A549 (cell line): ENCODE measurements at regions of chr1 and their contacts with region 1.

Region 1: DNA sequence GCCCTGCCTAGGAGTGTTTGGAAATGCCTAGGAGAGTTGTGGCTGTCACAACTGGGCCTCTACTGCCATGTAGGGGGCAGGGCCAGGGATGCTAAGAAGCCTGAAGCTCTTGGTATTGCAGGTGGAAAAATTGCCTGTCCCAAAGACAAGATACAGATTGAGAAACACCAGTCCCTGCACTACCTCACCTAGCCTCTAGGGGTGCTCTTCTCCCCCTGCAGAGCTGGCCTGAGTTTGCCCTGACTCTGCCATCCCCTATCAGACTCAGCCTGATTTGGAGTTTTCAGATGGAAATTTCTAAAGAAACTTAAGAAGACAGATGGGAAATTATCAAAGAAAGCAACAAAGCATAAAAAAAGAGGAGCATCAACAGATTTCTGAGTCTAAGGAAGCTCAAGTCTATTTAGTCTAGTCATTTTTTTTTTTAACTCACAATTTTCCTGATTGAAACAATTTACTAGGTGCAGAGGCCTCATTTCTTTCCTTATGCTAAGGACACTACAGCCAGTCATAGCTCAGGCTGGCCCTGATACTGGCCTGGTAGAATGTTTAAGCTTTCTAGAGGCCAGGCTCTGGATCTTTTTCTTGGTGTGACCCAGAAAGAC is 61.4 kb upstream of the LRRN2 start:
- DNase-seq: peak; percentile 50 to 67
- ATAC-seq: peak; percentile 81 to 89
- H3K4me3 ChIP-seq: no peak overlapping the region
- H3K27ac ChIP-seq: no peak overlapping the region
- H3K4me1 ChIP-seq: peaks cover 10% of the 10 kb centered on the region
- CTCF ChIP-seq: peak; percentile 76
- EP300 ChIP-seq: no peak
- POLR2A ChIP-seq: no peak
- RAD21 ChIP-seq: peak; percentile 42 to 51; a peak in 4 of 5 replicates

Region 2: GRCh38 chr1:204572931-204573891 is 173.7 kb before region 1 on chr1:
- CTCF ChIA-PET with region 1: interaction called, 15 read pairs
- POLR2A ChIA-PET with region 1: no interaction called
- DNase-seq: peak; percentile 30 to 57
- ATAC-seq: peak; percentile 59 to 65
- H3K4me3 ChIP-seq: no peak overlapping the region
- H3K27ac ChIP-seq: peak overlapping the region; percentile 36 to 51
- H3K4me1 ChIP-seq: peaks cover 27% of the 10 kb centered on the region
- CTCF ChIP-seq: no peak
- EP300 ChIP-seq: peak; percentile 25 to 60; a peak in 3 of 5 replicates
- POLR2A ChIP-seq: no peak
- RAD21 ChIP-seq: 0 out of 5 replicates have a peak, but pooled peaks of 1 of the 2 experiments have one; percentile 2

Region 3: DNA sequence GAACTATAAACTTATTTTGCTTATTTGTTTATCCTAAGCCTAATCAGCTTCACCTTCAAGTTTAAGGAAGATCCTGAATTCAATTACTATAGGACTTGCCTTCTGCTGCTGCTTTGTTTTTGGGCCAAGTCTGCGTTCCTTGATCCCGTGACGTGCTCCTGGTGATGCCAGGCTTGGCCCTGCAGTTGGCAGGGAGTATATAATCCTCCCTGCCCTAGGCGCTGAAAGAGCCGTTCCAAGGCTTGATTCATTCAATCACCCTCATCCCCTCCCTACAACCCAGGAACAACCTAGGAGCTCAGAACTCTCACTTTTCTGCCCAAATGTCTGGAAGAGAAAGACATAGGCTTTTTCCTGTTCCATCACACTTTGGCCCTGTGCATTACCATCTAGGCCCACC is 49.0 kb before region 1 on chr1:
- CTCF ChIA-PET with region 1: interaction called, 13 read pairs
- POLR2A ChIA-PET with region 1: no interaction called
- DNase-seq: no peak
- ATAC-seq: no peak
- H3K4me3 ChIP-seq: no peak overlapping the region
- H3K27ac ChIP-seq: no peak overlapping the region
- H3K4me1 ChIP-seq: no peaks in the 10 kb centered on the region
- CTCF ChIP-seq: no peak
- EP300 ChIP-seq: no peak
- POLR2A ChIP-seq: no peak
- RAD21 ChIP-seq: no peak

Region 4: DNA sequence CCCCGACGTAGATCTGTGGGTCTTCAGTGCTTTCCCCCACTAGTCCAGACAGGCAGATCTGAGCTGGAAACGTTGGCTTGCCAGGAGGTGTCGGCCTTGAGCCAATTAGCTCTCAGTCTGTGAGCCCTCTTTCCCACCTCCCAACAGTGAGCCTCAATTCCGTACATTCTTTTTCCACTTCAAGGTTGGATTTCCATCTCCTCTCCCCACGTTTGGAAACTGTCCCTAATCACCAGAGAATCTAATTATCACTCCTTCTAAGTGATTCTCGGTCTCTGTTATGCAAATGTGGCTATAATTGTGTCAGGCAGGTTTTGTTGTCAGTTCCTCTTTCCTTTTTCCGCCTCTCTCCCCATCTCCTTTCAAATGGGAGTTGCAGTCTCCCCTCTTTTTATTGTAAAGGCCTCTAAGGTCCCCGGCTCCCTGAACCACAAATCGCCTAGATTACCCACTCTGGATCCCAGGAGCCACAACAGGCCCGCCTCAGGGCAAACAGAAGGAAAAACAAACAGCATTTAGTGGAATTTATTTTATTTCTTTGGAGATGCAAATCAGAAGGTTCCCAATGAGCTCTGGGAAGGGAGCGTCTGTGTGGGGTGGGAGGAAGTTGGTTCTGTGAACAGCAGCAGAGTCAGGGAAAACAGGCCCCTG is 32.0 kb before region 1 on chr1:
- CTCF ChIA-PET with region 1: interaction called, 26 read pairs
- POLR2A ChIA-PET with region 1: interaction called, 3 read pairs
- DNase-seq: no peak
- ATAC-seq: peak in 1 of 2 experiments; percentile 49; a peak in 2 of 6 replicates
- H3K4me3 ChIP-seq: no peak overlapping the region
- H3K27ac ChIP-seq: no peak overlapping the region; a peak in 1 of 6 replicates
- H3K4me1 ChIP-seq: peaks cover 11% of the 10 kb centered on the region
- CTCF ChIP-seq: 0 out of 3 replicates have a peak, but pooled peaks have one; percentile 14
- EP300 ChIP-seq: no peak
- POLR2A ChIP-seq: no peak
- RAD21 ChIP-seq: peak in 1 of 2 experiments; percentile 41; a peak in 2 of 5 replicates

Region 5: GRCh38 chr1:204733869-204734596 is 12.9 kb before region 1 on chr1:
- CTCF ChIA-PET with region 1: interaction called, 25 read pairs
- POLR2A ChIA-PET with region 1: no interaction called
- DNase-seq: no peak
- ATAC-seq: no peak
- H3K4me3 ChIP-seq: no peak overlapping the region
- H3K27ac ChIP-seq: no peak overlapping the region
- H3K4me1 ChIP-seq: peaks cover 4% of the 10 kb centered on the region
- CTCF ChIP-seq: no peak
- EP300 ChIP-seq: no peak
- POLR2A ChIP-seq: no peak
- RAD21 ChIP-seq: no peak

Region 6: GRCh38 chr1:205375835-205376545 is 629.0 kb after region 1 on chr1:
- CTCF ChIA-PET with region 1: no interaction called
- POLR2A ChIA-PET with region 1: no interaction called
- DNase-seq: peak; percentile 54 to 69
- ATAC-seq: peak; percentile 84 to 88
- H3K4me3 ChIP-seq: no peak overlapping the region
- H3K27ac ChIP-seq: peak overlapping the region; percentile 36 to 66; a peak in 5 of 6 replicates
- H3K4me1 ChIP-seq: peaks cover 44% of the 10 kb centered on the region
- CTCF ChIP-seq: no peak
- EP300 ChIP-seq: no peak
- POLR2A ChIP-seq: no peak
- RAD21 ChIP-seq: no peak